Activated naive CD4-positive, alpha-beta T cell treated with anti-CD3 and anti-CD28 coated beads for 36 hours (primary cell): ENCODE measurements at regions of chr6 and their contacts with region 1.

Region 1: GRCh38 chr6:117346142-117346930 is 79.4 kb downstream of the ROS1 start:
- DNase-seq: no peak
- H3K4me3 Mint-ChIP-seq: no peak overlapping the region
- H3K27ac Mint-ChIP-seq: no peak overlapping the region
- H3K4me1 Mint-ChIP-seq: no peaks in the 10 kb centered on the region
- H3K27me3 Mint-ChIP-seq: peaks cover 3% of the 10 kb centered on the region

Region 2: GRCh38 chr6:116518621-116519368 is 827.5 kb before region 1 on chr6:
- CTCF ChIA-PET with region 1: no interaction called
- intact Hi-C with region 1: no loop called
- DNase-seq: no peak
- H3K4me3 Mint-ChIP-seq: no peak overlapping the region
- H3K27ac Mint-ChIP-seq: no peak overlapping the region
- H3K4me1 Mint-ChIP-seq: no peaks in the 10 kb centered on the region
- H3K27me3 Mint-ChIP-seq: peaks cover 3% of the 10 kb centered on the region

Region 3: DNA sequence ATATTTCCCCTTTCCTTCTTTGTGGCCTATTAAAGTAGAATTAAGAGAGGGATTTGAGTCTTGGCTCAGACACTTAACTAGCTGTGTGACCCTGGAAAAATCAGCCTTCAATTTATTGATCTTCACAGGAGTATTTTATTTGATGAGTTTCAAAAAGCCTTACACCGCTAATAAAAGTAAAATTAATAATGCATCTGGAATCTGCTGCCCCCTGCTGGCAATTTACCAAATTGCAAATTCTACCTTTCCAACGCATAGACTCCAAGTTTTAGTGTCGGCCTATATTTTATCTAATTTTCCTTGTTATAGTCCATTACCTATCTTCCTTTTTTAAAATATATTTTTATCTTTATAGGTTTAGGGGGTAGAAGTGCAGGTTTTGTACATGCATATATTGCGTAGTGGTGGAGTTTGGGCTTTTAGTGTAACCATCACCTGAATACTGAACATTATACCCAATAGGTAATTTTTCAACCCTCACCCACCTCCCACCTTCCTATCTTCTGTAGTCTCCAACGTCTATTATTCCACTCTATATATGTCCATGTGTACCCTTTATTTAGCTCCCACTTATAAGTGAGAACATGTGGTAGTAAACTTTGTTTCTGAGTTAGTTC is 209.7 kb after region 1 on chr6:
- CTCF ChIA-PET with region 1: interaction called, 3 read pairs
- intact Hi-C with region 1: loop called (anchors 1 kb)
- DNase-seq: peak; percentile 78
- H3K4me3 Mint-ChIP-seq: no peak overlapping the region
- H3K27ac Mint-ChIP-seq: no peak overlapping the region
- H3K4me1 Mint-ChIP-seq: peaks cover under 1% of the 10 kb centered on the region
- H3K27me3 Mint-ChIP-seq: peaks cover 2% of the 10 kb centered on the region

Region 4: DNA sequence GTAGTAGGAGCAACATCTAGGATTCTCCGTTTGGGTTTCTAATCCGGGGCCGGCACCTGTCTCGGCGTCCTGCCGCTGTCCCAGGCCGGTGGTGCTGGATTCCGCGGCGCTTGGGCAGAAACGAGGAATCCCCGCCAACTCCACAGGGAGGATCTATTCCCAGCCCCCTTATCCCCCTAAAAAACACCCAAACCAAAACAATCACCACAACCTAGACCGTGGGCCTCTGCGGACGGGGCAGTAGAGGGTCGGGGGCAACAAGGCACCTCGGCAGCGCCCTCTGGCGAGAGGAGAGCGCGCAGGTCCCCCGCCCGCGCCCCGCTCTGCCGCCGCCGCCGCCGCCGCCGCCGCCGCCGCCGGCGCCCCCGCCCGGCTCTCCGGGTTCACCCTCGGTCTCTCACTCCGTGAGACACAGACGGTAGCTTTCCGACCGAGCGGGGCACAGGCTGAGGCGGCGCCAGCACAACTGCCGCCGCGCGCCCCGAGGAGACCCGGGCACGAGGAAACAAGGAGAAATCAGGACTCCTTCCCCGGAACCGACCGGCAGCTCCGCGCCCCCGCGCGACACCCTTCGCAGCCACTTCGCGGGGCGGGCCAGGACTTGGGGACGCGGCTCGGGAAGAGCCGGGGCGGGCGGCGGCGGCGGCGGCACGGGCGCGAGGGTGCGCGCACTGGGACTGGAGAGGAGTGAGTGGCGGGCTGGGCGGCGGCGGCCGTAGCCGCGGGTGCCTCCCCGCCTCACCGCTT is 560.7 kb after region 1 on chr6 and contains the start of gene SLC35F1:
- CTCF ChIA-PET with region 1: no interaction called
- intact Hi-C with region 1: loop called (anchors 5 kb)
- DNase-seq: peak; percentile 40
- H3K4me3 Mint-ChIP-seq: peak within 1 kb of the TSS; percentile 63
- H3K27ac Mint-ChIP-seq: no peak within 1 kb of the TSS
- H3K4me1 Mint-ChIP-seq: peaks cover 11% of the 10 kb centered on the region
- H3K27me3 Mint-ChIP-seq: peaks cover 49% of the 10 kb centered on the region
- total RNA-seq, gene SLC35F1: 0.07 TPM in 1 of 2 experiments, not detected in the other

Region 5: GRCh38 chr6:118277631-118278030 is 931.3 kb after region 1 on chr6:
- CTCF ChIA-PET with region 1: no interaction called
- intact Hi-C with region 1: loop called (anchors 10 kb)
- DNase-seq: no peak
- H3K4me3 Mint-ChIP-seq: no peak overlapping the region
- H3K27ac Mint-ChIP-seq: no peak overlapping the region
- H3K4me1 Mint-ChIP-seq: peaks cover 3% of the 10 kb centered on the region
- H3K27me3 Mint-ChIP-seq: peaks cover 12% of the 10 kb centered on the region